Right lobe of liver (tissue), 6 donors: ENCODE measurements at regions of chr12 and their contacts with region 1.

Region 1: DNA sequence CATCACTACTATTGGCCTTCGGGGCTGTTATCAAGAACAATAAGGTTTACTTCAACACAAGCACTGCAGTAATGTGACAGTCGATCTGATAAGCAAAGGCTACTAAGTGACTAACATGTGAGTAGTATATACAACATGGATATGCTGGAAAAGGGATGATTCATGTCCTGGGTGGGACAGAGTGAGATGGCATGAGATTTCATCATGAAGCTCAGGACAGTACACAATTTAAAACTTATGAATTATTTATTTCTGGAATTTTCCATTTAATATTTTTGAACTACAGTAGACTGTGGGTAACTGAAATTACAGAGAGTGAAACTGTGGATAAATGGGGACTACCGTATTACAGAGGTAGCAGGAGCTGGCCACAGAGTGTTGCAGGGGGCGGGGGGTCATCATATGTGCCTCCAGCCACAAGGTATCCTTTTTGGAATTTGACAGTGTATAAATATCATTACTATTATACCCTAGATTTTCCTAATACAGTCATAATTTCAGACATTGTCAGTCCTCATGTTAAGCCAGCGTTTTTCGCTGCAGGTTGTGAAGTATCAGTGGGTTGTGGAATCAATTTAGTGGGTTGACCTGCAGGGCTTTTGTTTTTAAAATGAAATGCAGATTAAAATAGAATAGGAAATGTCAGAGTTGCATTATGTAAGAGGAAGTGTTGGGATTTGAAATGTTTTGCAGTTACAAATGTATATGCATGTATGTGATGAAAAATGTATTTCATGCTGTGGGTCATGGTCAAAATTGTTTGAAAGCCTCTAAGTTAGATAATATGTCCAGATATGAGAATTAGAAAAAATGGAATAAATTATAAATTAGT is 148.0 kb upstream of the NUDT4 start:
- DNase-seq: no peak
- ATAC-seq: no peak
- H3K4me3 ChIP-seq: no peak overlapping the region
- H3K27ac ChIP-seq: no peak overlapping the region
- H3K4me1 ChIP-seq: peaks cover 0 to 9% (median 4%) of the 10 kb centered on the region in 4 donors
- H3K27me3 ChIP-seq: no peaks in the 10 kb centered on the region
- CTCF ChIP-seq: no peak
- POLR2A ChIP-seq: no peak

Region 2: DNA sequence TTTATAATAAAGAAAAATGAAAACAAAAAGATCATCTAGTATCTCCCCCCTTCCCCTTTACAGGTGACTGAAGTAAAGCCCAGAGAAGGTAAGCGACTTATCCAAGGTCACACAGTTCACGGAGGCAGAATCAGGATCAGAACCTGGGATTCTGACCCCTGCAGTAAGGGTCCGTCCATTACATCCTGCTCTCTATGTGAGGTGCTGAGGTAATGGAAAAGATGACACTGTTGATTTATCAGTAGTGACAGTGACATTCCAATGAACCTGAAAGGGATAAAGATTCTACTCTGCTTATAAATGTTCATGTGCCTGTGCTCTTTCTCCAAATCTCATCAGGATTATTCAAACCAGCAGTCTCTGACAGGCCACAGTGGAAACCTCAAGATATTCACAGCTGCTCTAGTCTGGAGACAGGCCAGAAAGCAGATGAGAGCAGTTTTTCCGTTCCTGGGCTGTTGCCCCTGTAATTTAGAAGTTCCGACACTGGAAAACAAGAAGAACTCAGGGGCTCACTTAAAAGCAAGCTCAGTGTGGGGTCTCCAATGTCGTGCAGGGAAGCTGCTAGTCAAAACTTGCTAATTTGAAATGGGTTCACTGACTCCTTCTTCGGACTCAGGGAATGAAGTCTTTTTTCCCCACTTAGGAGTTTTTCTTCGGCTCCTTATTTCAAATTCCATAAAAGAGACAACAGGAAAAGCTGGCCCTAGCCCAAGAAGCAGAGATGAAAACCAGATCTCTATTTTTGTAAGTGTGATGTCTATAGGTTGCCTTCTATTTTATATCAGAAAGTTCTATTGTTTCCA is 168.8 kb before region 1 on chr12:
- intact Hi-C with region 1: no loop called
- DNase-seq: no peak
- ATAC-seq: no peak
- H3K4me3 ChIP-seq: no peak overlapping the region
- H3K27ac ChIP-seq: no peak overlapping the region
- H3K4me1 ChIP-seq: no peaks in the 10 kb centered on the region
- H3K27me3 ChIP-seq: no peaks in the 10 kb centered on the region
- CTCF ChIP-seq: no peak
- POLR2A ChIP-seq: no peak

Region 3: DNA sequence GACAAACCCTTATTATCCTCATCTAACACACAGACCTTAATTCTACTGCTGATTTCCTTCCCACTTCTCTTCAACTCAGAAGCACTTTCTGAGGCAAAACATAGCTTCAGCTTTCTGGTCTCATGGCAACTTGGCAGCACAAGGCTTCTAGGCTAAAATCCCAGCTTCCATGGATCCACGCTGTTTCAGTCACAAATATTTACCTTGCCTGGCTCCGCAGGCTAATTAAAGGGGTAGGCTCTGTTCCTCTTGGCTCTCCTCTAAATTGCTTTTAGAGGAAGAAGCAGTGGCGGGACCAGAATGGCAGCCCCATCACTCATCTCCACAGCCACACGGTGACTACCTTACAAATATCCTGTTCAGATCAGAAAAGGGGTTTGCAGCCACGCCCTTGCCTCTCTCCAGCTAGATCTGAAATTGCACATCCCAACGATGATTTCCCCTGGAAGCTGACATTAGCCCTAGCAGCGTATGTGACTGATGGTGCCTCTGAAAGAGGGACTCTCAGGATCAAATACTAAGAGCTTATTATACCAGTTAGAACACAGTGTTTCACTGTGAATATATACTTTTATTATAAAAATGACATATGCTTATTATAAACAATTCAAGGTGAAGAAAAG is 73.5 kb before region 1 on chr12:
- intact Hi-C with region 1: loop called in 1 of 2 experiments (anchors 10 kb)
- DNase-seq: peak in 1 of 3 donors; percentile 66
- ATAC-seq: peak; percentile 78 to 87 (median 81)
- H3K4me3 ChIP-seq: no peak overlapping the region
- H3K27ac ChIP-seq: peak overlapping the region in 1 of 3 donors; percentile 47
- H3K4me1 ChIP-seq: peaks cover 0 to 21% (median 1%) of the 10 kb centered on the region in 4 donors
- H3K27me3 ChIP-seq: no peaks in the 10 kb centered on the region
- CTCF ChIP-seq: no peak
- POLR2A ChIP-seq: no peak

Region 4: DNA sequence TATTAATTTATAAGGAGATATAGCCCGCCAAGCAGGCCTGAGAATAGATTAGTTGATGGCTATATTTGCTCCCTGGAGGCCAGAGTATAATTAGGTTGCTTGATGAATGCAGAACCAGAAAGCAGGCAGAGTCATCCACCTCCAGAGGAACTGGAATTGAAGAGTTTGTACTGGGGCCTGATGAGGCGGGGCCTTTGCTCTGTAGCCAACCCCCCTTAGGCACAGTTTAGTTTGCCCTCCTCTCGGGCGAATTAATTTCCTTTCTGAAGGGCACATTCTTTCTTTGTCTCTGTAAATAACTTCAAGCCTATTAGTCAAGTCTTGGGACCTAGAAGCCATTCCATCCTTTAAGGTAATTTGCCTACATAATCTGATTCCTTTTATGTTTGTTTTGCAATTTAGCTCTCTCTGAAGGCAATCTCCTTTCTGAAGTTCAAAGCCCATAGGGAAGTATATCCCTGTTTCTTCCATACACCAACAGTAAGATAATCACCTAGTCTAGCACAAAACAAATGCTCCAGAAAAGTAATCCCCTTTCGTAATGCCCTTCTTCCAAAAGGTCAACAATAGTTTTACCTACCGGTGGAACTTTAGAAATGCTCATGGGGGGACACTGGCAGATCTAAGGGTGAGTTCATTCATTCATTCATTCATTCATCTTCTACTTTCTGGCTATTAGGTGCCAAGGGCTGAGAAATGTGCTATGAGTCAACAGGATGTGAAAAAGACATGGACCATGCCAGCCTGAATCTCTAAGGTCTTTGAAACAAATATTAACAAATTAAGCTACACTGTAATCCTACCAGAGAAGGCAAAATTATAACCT is 63.2 kb after region 1 on chr12:
- intact Hi-C with region 1: no loop called
- DNase-seq: no peak
- ATAC-seq: no peak
- H3K4me3 ChIP-seq: no peak overlapping the region
- H3K27ac ChIP-seq: no peak overlapping the region
- H3K4me1 ChIP-seq: no peaks in the 10 kb centered on the region
- H3K27me3 ChIP-seq: no peaks in the 10 kb centered on the region
- CTCF ChIP-seq: no peak
- POLR2A ChIP-seq: no peak